ENCODE measurements at regions of chr14 and their contacts with region 1.

Region 1: DNA sequence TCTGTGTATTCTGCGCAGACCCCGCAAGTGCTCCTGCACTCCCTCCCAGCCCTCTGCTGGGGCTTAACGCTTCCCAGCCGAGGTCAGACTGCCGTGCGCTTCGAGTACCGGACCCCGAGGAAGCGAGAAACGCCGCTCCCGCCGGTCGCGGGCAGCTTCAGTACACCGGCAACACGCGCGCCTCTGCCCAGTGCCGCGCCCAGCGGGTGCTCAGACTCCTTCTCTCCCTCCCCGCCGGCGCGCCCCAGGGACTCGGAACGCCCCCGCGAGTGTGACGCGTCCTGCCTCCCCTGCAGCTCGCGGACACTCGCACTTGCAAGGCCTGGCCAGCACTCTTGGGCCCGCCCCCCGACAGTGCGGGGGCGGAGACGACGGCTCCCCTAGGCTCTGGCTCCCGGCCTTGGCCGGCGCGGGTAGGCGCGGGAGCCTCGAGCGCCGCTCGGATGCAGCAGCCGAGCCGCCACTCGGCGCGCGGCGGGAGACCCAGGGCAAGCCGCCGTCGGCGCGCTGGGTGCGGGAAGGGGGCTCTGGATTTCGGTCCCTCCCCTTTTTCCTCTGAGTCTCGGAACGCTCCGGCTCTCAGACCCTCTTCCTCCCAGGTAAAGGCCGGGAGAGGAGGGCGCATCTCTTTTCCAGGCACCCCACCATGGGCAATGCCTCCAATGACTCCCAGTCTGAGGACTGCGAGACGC is at the start of gene PTGER2:
- DNase-seq: peak; percentile 97
- ATAC-seq: peak; percentile 82
- H3K4me3 Mint-ChIP-seq: peak within 1 kb of the TSS; percentile 100
- H3K27ac Mint-ChIP-seq: peak within 1 kb of the TSS; percentile 99
- H3K4me1 Mint-ChIP-seq: peaks cover 56% of the 10 kb centered on the region
- H3K27me3 Mint-ChIP-seq: no peaks in the 10 kb centered on the region
- total RNA-seq, gene PTGER2: 97.6 to 117 TPM

Region 2: DNA sequence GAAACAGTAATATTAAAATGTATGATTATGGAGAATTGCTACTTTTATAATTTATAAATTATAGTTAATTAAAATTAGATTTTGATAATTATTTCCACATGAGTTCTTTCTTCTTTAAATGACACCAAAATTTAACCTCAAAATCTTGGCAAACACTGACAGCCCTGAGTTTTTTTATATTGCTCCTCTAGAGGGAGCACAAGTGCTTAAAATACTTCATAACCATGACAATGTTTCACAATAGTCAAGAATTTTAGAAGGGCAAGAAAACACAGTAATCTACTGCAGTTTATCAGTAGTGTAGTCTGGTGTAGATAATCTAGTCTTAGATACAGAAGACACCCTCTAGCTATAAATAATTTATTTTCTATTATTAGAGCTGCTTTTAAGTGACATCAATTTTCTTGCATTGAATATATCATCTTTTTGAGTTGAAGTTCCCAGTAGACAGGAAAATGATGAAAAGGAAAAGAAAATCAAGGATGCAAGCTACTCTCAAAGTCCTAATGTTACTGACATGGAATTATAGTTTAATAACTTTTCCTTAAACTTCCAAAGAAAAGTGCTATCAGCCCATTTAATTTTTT is 14.3 kb before region 1 on chr14:
- CTCF ChIA-PET with region 1: interaction called, 26 read pairs
- DNase-seq: no peak
- ATAC-seq: peak; percentile 76
- H3K4me3 Mint-ChIP-seq: no peak overlapping the region
- H3K27ac Mint-ChIP-seq: no peak overlapping the region
- H3K4me1 Mint-ChIP-seq: peaks cover 40% of the 10 kb centered on the region
- H3K27me3 Mint-ChIP-seq: no peaks in the 10 kb centered on the region

Region 3: DNA sequence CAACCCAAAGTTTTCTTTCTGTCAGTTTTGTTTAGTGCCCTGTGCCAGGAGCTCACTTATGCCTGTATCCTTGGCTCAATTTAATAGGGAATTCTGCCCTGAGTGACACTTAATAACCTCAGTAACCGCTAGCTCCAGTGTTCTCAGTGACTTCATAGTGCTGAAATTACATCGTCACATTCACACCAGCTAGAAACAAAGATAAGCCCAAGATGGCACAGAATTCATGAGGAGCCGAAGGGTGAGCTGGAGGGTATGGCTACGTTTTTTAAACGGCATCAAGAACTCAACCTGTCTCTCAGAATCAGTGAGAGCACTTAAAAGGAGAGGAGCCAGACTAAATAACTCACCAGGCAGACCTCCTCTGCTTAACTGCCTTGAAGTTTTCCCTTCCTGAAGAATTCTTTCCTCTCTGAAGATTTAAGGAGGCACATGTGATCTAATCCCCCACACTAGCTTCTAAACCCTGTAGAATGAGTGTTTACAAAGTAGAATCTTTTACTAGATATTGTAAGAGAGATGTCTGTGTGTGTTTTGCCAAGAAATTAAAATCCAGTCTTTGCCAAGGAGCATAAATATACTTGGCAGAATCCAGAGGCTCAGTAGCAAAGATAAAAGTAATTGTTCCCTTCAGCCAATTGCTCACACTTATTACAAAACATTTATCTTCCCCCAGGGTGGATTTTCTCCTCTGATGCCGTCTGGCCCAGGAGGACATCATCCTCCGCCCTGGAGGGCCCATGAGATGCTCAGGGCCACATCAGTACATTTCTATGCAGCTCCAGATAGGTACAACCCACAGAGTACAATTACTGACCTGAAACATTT is 37.4 kb after region 1 on chr14:
- CTCF ChIA-PET with region 1: interaction called, 52 read pairs
- DNase-seq: no peak
- ATAC-seq: peak; percentile 70
- H3K4me3 Mint-ChIP-seq: peak overlapping the region; percentile 68
- H3K27ac Mint-ChIP-seq: peak overlapping the region; percentile 92
- H3K4me1 Mint-ChIP-seq: peaks cover 76% of the 10 kb centered on the region
- H3K27me3 Mint-ChIP-seq: peaks cover 5% of the 10 kb centered on the region